Activated CD4-positive, alpha-beta memory T cell treated with anti-CD3 and anti-CD28 coated beads for 36 hours (primary cell): ENCODE measurements at regions of chr1 and their contacts with region 1.

Region 1: DNA sequence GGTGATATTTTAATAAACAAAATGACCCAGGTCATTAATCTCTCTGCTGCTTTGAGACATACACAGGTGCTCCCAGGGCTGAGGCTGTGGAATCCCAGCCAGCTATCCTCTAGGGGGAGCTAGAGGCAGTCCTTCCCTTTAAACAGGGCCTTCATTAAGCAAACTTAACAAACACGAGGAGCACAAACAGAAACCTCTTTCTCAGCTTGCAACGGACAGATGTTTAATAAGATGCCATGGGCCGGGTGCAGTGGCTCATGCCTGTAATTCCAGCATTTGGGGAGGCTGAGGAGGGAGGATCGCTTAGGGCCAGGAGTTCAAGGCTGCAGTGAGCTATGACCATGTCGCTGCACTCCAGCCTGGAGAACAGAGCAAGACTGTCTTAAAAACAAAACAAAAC is 106.7 kb downstream of the HIVEP3 start:
- DNase-seq: peak; percentile 80
- H3K4me3 Mint-ChIP-seq: no peak overlapping the region
- H3K27ac Mint-ChIP-seq: no peak overlapping the region
- H3K4me1 Mint-ChIP-seq: peaks cover 48% of the 10 kb centered on the region
- H3K27me3 Mint-ChIP-seq: no peaks in the 10 kb centered on the region

Region 2: DNA sequence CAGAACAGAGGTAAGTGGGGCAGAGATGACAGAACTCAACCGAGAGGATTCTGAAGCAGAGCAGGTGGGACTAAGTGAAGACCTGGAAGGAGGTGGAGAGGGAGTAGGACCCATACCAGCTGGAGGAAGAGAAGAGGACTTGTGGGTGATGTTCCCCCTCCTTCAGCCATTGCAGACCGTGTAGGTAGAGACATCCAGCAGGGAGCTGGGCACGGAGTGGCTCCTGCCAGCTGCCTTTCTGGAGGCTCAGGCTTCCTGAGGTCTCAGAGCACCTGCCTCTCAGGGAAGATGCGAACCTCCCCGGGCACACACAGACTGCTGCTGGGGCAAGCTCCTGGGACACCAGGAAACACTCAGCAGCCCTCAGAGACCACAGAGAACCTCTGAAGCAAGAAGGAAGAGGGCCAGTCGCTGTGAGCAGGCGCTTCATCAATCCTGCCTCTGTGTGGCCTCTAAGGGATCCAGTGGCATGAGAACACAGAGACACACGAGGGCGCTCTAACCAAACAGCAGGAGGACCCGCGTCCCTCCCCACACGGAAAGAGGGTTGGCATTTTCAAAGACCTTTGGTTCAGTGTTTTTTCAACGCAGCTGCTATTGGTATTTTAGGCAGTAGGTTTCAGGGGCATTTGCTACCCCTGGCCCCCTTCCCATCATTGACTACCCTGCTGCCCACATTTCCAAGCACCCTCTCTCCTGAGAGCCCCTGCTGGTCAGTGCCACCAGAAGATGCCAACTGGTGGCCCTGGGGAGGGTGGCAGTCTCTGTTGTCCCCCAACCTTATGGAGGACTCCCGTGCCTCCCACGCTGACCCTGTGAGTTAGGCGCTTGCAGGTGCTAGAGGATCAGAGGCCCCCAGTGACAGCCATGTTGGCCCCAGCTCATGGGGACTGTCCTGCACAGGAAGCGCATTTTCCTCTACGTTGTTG is 238.0 kb before region 1 on chr1:
- CTCF ChIA-PET with region 1: interaction called, 42 read pairs
- POLR2A ChIA-PET with region 1: no interaction called
- intact Hi-C with region 1: loop called (anchors 1 kb)
- DNase-seq: peak; percentile 88
- H3K4me3 Mint-ChIP-seq: no peak overlapping the region
- H3K27ac Mint-ChIP-seq: no peak overlapping the region
- H3K4me1 Mint-ChIP-seq: peaks cover 22% of the 10 kb centered on the region
- H3K27me3 Mint-ChIP-seq: no peaks in the 10 kb centered on the region

Region 3: DNA sequence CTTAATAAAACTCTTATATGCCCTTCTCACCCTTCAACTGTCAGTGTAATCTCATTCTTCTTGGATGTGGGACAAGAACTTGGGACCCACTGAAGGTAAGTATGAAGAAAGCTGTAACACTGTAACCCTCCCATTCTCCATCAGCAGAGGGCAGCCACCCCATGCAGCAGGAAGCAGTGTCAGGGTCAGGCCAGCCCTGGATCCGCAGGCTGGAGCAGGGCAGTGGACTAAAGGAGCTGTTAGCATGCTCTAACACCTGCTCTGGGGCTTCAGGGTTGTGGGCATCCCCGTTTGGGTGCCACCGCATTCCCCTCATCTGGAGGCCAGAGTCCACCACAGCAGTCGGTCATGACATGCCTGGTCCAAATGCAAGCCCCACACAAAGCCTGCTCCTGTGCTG is 49.8 kb before region 1 on chr1:
- CTCF ChIA-PET with region 1: no interaction called
- POLR2A ChIA-PET with region 1: no interaction called
- intact Hi-C with region 1: no loop called
- DNase-seq: peak; percentile 7
- H3K4me3 Mint-ChIP-seq: no peak overlapping the region
- H3K27ac Mint-ChIP-seq: no peak overlapping the region
- H3K4me1 Mint-ChIP-seq: peaks cover 11% of the 10 kb centered on the region
- H3K27me3 Mint-ChIP-seq: no peaks in the 10 kb centered on the region

Region 4: GRCh38 chr1:41791667-41792484 is 20.2 kb before region 1 on chr1:
- CTCF ChIA-PET with region 1: interaction called, 11 read pairs
- POLR2A ChIA-PET with region 1: no interaction called
- intact Hi-C with region 1: no loop called
- DNase-seq: peak; percentile 73
- H3K4me3 Mint-ChIP-seq: no peak overlapping the region
- H3K27ac Mint-ChIP-seq: peak overlapping the region; percentile 78
- H3K4me1 Mint-ChIP-seq: peaks cover 51% of the 10 kb centered on the region
- H3K27me3 Mint-ChIP-seq: no peaks in the 10 kb centered on the region

Region 5: DNA sequence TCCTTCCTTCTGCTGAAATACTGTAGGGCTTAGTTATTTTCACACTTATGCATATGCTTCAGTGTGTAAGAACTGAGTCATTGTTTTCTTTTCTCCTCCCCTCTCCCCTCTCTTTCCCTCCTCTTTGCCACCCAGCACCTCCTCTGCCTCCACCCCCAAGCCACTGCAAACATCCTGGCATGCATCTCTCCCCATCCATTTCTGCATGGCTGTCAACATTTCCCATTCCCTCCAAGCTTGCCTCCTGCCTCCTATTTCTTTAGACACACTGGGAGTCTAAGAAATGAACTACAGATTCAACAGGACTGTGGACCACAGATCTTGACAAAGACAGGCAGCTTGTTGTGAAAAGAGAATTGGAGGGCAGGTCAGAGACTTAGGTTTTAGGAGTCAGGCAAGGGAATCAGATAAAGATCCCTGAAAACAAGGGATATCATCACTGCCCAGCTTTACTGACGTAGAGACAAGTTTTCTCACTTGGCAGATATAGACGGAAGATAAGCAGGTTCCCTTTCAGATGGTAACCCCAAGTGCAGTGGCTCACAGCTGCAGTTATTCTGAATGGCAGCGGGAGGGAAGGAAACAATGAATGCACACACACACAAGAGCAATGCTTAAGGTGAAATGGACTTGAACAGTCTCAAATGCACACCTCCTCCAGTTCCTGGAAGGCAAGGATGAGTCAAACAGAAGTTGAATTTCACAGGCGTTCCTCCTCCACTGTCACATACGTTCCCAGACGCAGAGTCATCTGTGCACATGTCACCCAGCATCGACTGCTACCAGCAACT is 50.5 kb after region 1 on chr1:
- CTCF ChIA-PET with region 1: interaction called, 11 read pairs
- POLR2A ChIA-PET with region 1: interaction called, 3 read pairs
- intact Hi-C with region 1: loop called (anchors 1 kb)
- DNase-seq: peak; percentile 83
- H3K4me3 Mint-ChIP-seq: peak overlapping the region; percentile 18
- H3K27ac Mint-ChIP-seq: peak overlapping the region; percentile 83
- H3K4me1 Mint-ChIP-seq: peaks cover 36% of the 10 kb centered on the region
- H3K27me3 Mint-ChIP-seq: no peaks in the 10 kb centered on the region

Region 6: DNA sequence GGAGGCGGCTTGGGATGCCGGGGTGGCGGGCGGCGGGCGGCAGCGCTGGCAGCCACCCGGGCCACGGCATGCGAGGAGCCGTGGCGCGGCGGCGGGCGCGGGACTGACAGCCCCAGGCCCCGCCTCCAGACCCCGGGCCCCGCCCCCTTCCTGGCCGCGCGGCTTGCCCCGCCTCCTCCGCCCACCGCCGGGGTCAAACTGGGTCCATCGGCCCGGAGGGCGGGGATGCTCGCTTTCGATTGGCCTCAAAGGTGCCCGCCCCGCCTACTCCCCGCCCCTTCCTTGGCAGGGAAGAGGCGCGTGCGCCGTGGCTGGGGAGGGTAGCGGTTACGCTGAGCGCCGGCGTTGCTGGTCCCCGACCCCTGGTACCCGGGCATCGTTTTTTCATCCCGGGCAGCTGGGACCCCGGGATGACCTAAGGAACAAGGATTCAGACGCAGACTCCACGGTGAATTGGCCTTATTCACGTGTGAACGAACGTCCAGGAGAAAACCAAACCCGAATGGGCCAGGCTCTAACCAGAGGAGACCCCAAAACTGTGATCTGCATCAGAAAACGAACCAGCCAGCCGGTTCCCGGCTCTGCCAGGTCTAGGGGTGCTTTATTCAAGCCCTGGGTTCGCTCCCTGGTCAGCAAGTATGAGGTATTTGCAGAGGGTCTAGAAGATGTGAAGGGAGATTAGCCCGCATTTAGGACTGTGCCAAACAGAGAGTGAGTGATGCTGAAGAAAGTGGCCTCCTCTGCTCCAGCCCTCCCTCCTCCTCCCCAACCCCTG is 224.0 kb after region 1 on chr1:
- CTCF ChIA-PET with region 1: interaction called, 7 read pairs
- POLR2A ChIA-PET with region 1: no interaction called
- intact Hi-C with region 1: loop called (anchors 5 kb)
- DNase-seq: peak; percentile 99
- H3K4me3 Mint-ChIP-seq: peak overlapping the region; percentile 81
- H3K27ac Mint-ChIP-seq: peak overlapping the region; percentile 46
- H3K4me1 Mint-ChIP-seq: peaks cover 38% of the 10 kb centered on the region
- H3K27me3 Mint-ChIP-seq: no peaks in the 10 kb centered on the region